Gastrocnemius medialis (tissue), 4 donors: ENCODE measurements at regions of chr9 and their contacts with region 1.

Region 1: GRCh38 chr9:127877566-127877998 is at the start of gene AK1:
- DNase-seq: peak; percentile 75 to 83
- ATAC-seq: peak; percentile 68 to 70
- H3K4me3 ChIP-seq: peak within 1 kb of the TSS; percentile 60 to 74 (median 68)
- H3K27ac ChIP-seq: peak within 1 kb of the TSS; percentile 86 to 96 (median 91)
- H3K4me1 ChIP-seq: peaks cover 47 to 48% of the 10 kb centered on the region in 2 donors
- H3K27me3 ChIP-seq: no peaks in the 10 kb centered on the region
- CTCF ChIP-seq: no peak
- POLR2A ChIP-seq: peak; percentile 74 to 90
- total RNA-seq, gene AK1: 240 to 489 (median 359) TPM

Region 2: GRCh38 chr9:127785023-127785932 is 92.3 kb before region 1 on chr9:
- in situ Hi-C with region 1: no loop called
- intact Hi-C with region 1: loop called (anchors 5 kb)
- DNase-seq: peak; percentile 73 to 84
- ATAC-seq: peak; percentile 80
- H3K4me3 ChIP-seq: peak overlapping the region; percentile 59 to 100 (median 92)
- H3K27ac ChIP-seq: peak overlapping the region; percentile 89 to 98 (median 96)
- H3K4me1 ChIP-seq: peaks cover 7 to 12% of the 10 kb centered on the region in 2 donors
- H3K27me3 ChIP-seq: no peaks in the 10 kb centered on the region
- CTCF ChIP-seq: peak; percentile 79 to 99 (median 99)
- POLR2A ChIP-seq: no peak

Region 3: GRCh38 chr9:127899128-127899946 is 21.8 kb after region 1 on chr9 and contains the start of gene ST6GALNAC6:
- in situ Hi-C with region 1: no loop called
- intact Hi-C with region 1: loop called (anchors 1 kb)
- DNase-seq: peak in 1 of 2 donors; percentile 64
- ATAC-seq: peak; percentile 68 to 72
- H3K4me3 ChIP-seq: peak within 1 kb of the TSS; percentile 89 to 94 (median 90)
- H3K27ac ChIP-seq: peak within 1 kb of the TSS; percentile 90 to 97 (median 93)
- H3K4me1 ChIP-seq: peaks cover 30 to 45% of the 10 kb centered on the region in 2 donors
- H3K27me3 ChIP-seq: no peaks in the 10 kb centered on the region
- CTCF ChIP-seq: peak in 1 of 5 experiments; percentile 13
- POLR2A ChIP-seq: peak; percentile 69 to 79
- total RNA-seq, gene ST6GALNAC6: 46.7 to 69.3 (median 56.9) TPM